ENCODE measurements at regions of chr2 and their contacts with region 1.

Region 1: DNA sequence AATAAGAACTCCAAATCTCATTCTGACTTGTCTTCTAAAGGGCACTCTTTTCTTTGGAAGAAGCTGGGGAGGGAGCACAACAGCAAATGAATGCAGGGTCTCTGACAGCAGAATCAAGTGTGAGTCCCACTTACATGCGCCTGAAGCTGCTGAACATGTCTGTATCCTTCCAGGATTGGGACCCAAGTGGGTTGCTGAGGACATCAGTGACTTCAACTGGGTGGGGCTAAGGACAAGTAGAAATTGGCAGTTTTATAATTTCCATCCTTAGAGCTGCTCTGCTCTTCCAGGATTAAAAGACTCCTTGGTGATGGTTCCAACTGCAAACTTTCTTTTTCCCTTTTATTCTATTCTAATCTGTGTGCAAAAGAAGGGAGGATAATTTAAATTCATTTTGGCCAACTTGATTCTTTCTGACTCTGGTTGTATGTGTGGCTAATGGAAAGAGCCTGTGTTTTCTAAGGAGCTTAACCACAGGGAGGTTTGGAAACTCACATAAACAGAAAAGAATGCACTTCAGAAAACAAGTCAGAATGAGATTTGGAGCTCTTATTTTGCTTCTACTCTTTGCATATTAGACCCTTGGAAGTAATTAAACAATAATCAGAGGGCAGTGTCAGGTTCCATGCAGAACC is 20.6 kb downstream of the ANTXR1 start:
- DNase-seq: no peak
- H3K4me3 ChIP-seq: no peak overlapping the region
- H3K4me3 Mint-ChIP-seq: no peak overlapping the region
- H3K27ac ChIP-seq: no peak overlapping the region
- H3K27ac Mint-ChIP-seq: no peak overlapping the region
- H3K4me1 ChIP-seq: no peaks in the 10 kb centered on the region
- H3K4me1 Mint-ChIP-seq: peaks cover 1% of the 10 kb centered on the region
- H3K27me3 ChIP-seq: peaks cover 0 to 5% of the 10 kb centered on the region in 2 donors
- H3K27me3 Mint-ChIP-seq: peaks cover 5 to 11% (median 8%) of the 10 kb centered on the region in 3 donors
- CTCF ChIP-seq: no peak

Region 2: GRCh38 chr2:69054431-69054830 is 20.9 kb after region 1 on chr2:
- intact Hi-C with region 1: no loop called
- DNase-seq: no peak
- H3K4me3 ChIP-seq: no peak overlapping the region
- H3K4me3 Mint-ChIP-seq: no peak overlapping the region
- H3K27ac ChIP-seq: no peak overlapping the region
- H3K27ac Mint-ChIP-seq: no peak overlapping the region
- H3K4me1 ChIP-seq: no peaks in the 10 kb centered on the region
- H3K4me1 Mint-ChIP-seq: no peaks in the 10 kb centered on the region
- H3K27me3 ChIP-seq: peaks cover 0 to 2% of the 10 kb centered on the region in 2 donors
- H3K27me3 Mint-ChIP-seq: peaks cover under 1 to 3% (median 2%) of the 10 kb centered on the region in 3 donors
- CTCF ChIP-seq: no peak

Region 3: GRCh38 chr2:69214898-69215297 is 181.3 kb after region 1 on chr2:
- intact Hi-C with region 1: loop called in 1 of 2 experiments (anchors 10 kb)
- DNase-seq: peak; percentile 47 to 66 (median 51)
- H3K4me3 ChIP-seq: no peak overlapping the region
- H3K4me3 Mint-ChIP-seq: no peak overlapping the region
- H3K27ac ChIP-seq: no peak overlapping the region
- H3K27ac Mint-ChIP-seq: peak overlapping the region in 2 of 7 donors; percentile 19 to 56
- H3K4me1 ChIP-seq: peaks cover 9 to 11% of the 10 kb centered on the region in 2 donors
- H3K4me1 Mint-ChIP-seq: peaks cover 12% of the 10 kb centered on the region
- H3K27me3 ChIP-seq: no peaks in the 10 kb centered on the region
- H3K27me3 Mint-ChIP-seq: peaks cover 0 to 2% (median 2%) of the 10 kb centered on the region in 3 donors
- CTCF ChIP-seq: no peak

Measured in CD14-positive monocyte (primary cell).